K562 (cell line): ENCODE measurements at regions of chr4 and their contacts with region 1.

Region 1: GRCh38 chr4:2792711-2793585 is at the start of gene SH3BP2:
- DNase-seq: peak; percentile 90 to 97 (median 95)
- ATAC-seq: peak; percentile 83
- H3K4me3 ChIP-seq: peak within 1 kb of the TSS; percentile 50
- H3K27ac ChIP-seq: peak within 1 kb of the TSS; percentile 39; the same call in 2 of the 3 replicates
- H3K4me1 ChIP-seq: peaks cover 15 to 93% of the 10 kb centered on the region in 2 experiments
- H3K27me3 ChIP-seq: no peaks in the 10 kb centered on the region
- CTCF ChIP-seq: no peak
- EP300 ChIP-seq: no peak
- POLR2A ChIP-seq: no peak
- RAD21 ChIP-seq: no peak
- polyA plus RNA-seq, gene SH3BP2: 0.34 to 0.72 TPM

Region 2: GRCh38 chr4:2545321-2546013 is 247.5 kb before region 1 on chr4:
- CTCF ChIA-PET with region 1: no interaction called
- POLR2A ChIA-PET with region 1: no interaction called
- in situ Hi-C with region 1: no loop called
- intact Hi-C with region 1: no loop called
- DNase-seq: no peak
- ATAC-seq: no peak
- H3K4me3 ChIP-seq: no peak overlapping the region
- H3K27ac ChIP-seq: no peak overlapping the region
- H3K4me1 ChIP-seq: no peaks in the 10 kb centered on the region; a peak in 1 of 5 replicates
- H3K27me3 ChIP-seq: no peaks in the 10 kb centered on the region
- CTCF ChIP-seq: no peak
- EP300 ChIP-seq: no peak
- POLR2A ChIP-seq: no peak
- RAD21 ChIP-seq: no peak

Region 3: GRCh38 chr4:2843263-2843940 is 50.5 kb after region 1 on chr4 and contains the start of gene ADD1:
- CTCF ChIA-PET with region 1: no interaction called
- POLR2A ChIA-PET with region 1: no interaction called
- in situ Hi-C with region 1: no loop called
- intact Hi-C with region 1: loop called (anchors 5 kb)
- DNase-seq: peak; percentile 94 to 100 (median 100)
- ATAC-seq: peak; percentile 93
- H3K4me3 ChIP-seq: peak within 1 kb of the TSS; percentile 82
- H3K27ac ChIP-seq: peak within 1 kb of the TSS; percentile 83
- H3K4me1 ChIP-seq: peaks cover 19 to 34% of the 10 kb centered on the region in 2 experiments
- H3K27me3 ChIP-seq: no peaks in the 10 kb centered on the region
- CTCF ChIP-seq: no peak
- EP300 ChIP-seq: peak; percentile 15; the same call in 1 of the 2 replicates
- POLR2A ChIP-seq: peak; percentile 87
- RAD21 ChIP-seq: no peak
- polyA plus RNA-seq, gene ADD1: 17.5 to 20.7 TPM

Region 4: GRCh38 chr4:2867758-2868491 is 75.0 kb after region 1 on chr4:
- CTCF ChIA-PET with region 1: no interaction called
- POLR2A ChIA-PET with region 1: no interaction called
- in situ Hi-C with region 1: no loop called
- intact Hi-C with region 1: loop called (anchors 5 kb)
- DNase-seq: peak; percentile 64 to 86 (median 76)
- ATAC-seq: peak; percentile 93
- H3K4me3 ChIP-seq: no peak overlapping the region
- H3K27ac ChIP-seq: peak overlapping the region; percentile 11; the same call in 1 of the 3 replicates
- H3K4me1 ChIP-seq: peaks cover 22 to 46% of the 10 kb centered on the region in 2 experiments
- H3K27me3 ChIP-seq: no peaks in the 10 kb centered on the region
- CTCF ChIP-seq: no peak
- EP300 ChIP-seq: peak; percentile 72
- POLR2A ChIP-seq: no peak
- RAD21 ChIP-seq: peak in 1 of 2 experiments; percentile 10; a peak in 1 of 4 replicates

Region 5: GRCh38 chr4:2948895-2949765 is 156.2 kb after region 1 on chr4:
- CTCF ChIA-PET with region 1: no interaction called
- POLR2A ChIA-PET with region 1: no interaction called
- in situ Hi-C with region 1: no loop called
- intact Hi-C with region 1: no loop called
- DNase-seq: no peak
- ATAC-seq: peak; percentile 56
- H3K4me3 ChIP-seq: no peak overlapping the region
- H3K27ac ChIP-seq: no peak overlapping the region
- H3K4me1 ChIP-seq: no peaks in the 10 kb centered on the region
- H3K27me3 ChIP-seq: no peaks in the 10 kb centered on the region
- CTCF ChIP-seq: peak; percentile 17 to 27 (median 26); a peak in 2 of 6 replicates
- EP300 ChIP-seq: no peak
- POLR2A ChIP-seq: no peak
- RAD21 ChIP-seq: peak in 1 of 2 experiments; percentile 21; a peak in 1 of 4 replicates

Region 6: DNA sequence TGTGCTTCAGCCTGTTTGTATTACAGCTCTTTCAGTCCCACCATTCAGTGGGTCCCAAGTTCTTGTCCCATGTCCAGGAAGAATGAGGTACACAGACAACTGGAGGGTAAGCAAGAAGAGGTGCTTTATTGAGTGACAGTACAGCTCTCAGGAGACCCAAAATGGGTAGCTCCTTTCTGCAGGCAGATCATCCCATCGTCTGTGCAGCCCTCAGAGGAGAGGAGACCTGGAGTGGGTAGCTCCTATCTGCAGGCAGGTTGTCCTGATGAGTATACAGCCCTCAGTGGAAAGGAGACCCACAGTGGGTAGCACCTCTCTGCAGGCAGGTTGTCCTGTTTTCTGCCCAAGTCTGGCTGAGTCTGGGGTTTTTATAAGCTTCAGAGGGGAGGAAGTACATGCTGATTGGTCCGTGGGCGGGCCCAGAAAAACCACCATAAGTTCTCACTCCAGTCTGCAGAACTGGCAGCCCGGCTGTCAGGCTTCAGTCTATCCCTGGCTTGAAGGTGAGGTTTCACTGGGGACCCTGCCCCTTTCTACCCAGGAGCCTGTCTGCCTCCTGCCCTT is 188.4 kb after region 1 on chr4:
- CTCF ChIA-PET with region 1: no interaction called
- POLR2A ChIA-PET with region 1: no interaction called
- in situ Hi-C with region 1: no loop called
- intact Hi-C with region 1: no loop called
- DNase-seq: no peak
- ATAC-seq: no peak
- H3K4me3 ChIP-seq: no peak overlapping the region
- H3K27ac ChIP-seq: no peak overlapping the region
- H3K4me1 ChIP-seq: peaks cover 5 to 8% of the 10 kb centered on the region in 2 experiments; a peak in 3 of 5 replicates
- H3K27me3 ChIP-seq: peaks cover 0 to 4% of the 10 kb centered on the region in 2 experiments; a peak in 1 of 5 replicates
- CTCF ChIP-seq: no peak
- EP300 ChIP-seq: no peak
- POLR2A ChIP-seq: no peak
- RAD21 ChIP-seq: no peak

Region 7: DNA sequence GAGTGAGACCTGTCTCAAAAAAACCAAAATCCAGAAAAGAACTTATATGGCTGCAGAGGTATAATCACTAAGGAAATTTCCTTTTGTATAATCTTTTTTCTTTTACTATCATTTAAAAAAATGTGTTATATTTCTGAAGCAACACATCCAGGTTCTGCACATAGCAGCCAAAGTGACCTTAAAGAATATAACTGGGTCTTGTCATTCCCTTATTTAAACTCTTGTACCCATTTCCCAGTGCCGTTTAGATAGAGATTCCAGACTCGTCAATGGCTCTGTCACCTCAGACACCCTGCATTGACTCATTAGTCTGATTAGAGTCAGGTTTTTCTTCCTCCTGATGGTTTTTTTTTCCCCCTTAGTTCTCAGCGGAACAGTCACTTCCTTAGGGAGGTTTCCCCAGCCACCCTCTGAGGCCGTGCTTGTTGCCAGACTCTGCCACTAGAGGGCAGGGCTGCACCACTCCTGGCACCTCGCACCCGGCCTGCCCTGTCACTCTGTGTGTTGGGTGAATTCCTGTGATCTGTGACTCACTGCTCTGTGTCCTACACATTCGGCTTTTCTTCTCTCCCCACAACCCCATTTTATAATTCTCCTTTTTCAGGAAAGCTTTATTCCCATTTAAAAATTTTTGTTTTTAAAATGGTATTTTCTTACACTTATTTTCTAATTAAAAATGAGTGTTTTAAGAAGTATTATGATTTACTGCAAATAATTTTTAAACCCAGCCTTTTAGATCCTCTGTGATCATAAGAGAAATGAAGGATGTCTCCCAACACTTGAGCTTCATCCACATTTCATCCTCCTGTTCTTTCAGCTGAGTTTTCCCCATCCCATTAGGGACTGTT is 313.6 kb after region 1 on chr4:
- CTCF ChIA-PET with region 1: no interaction called
- POLR2A ChIA-PET with region 1: no interaction called
- in situ Hi-C with region 1: no loop called
- intact Hi-C with region 1: no loop called
- DNase-seq: peak; percentile 85 to 88 (median 87)
- ATAC-seq: peak; percentile 100
- H3K4me3 ChIP-seq: no peak overlapping the region
- H3K27ac ChIP-seq: no peak overlapping the region
- H3K4me1 ChIP-seq: no peaks in the 10 kb centered on the region; a peak in 1 of 5 replicates
- H3K27me3 ChIP-seq: no peaks in the 10 kb centered on the region
- CTCF ChIP-seq: peak; percentile 91 to 98 (median 97)
- EP300 ChIP-seq: 0 out of 2 replicates have a peak, but pooled peaks have one; percentile 7
- POLR2A ChIP-seq: no peak
- RAD21 ChIP-seq: peak; percentile 83 to 92